ENCODE measurements at regions of chr4 and their contacts with region 1.

Region 1: GRCh38 chr4:118278473-118279274 is 74.1 kb downstream of the PRSS12 start:
- DNase-seq: peak; percentile 99
- H3K4me3 ChIP-seq: peak overlapping the region; percentile 46 to 94 (median 64)
- H3K27ac ChIP-seq: peak overlapping the region; percentile 89 to 95 (median 94)
- H3K4me1 ChIP-seq: peaks cover 24 to 31% of the 10 kb centered on the region in 2 donors
- H3K27me3 ChIP-seq: no peaks in the 10 kb centered on the region
- CTCF ChIP-seq: no peak
- POLR2A ChIP-seq: peak; percentile 51 to 96

Region 2: GRCh38 chr4:118102195-118102594 is 176.5 kb before region 1 on chr4:
- intact Hi-C with region 1: no loop called
- DNase-seq: no peak
- H3K4me3 ChIP-seq: no peak overlapping the region
- H3K27ac ChIP-seq: no peak overlapping the region
- H3K4me1 ChIP-seq: no peaks in the 10 kb centered on the region
- H3K27me3 ChIP-seq: no peaks in the 10 kb centered on the region
- CTCF ChIP-seq: no peak
- POLR2A ChIP-seq: no peak

Region 3: DNA sequence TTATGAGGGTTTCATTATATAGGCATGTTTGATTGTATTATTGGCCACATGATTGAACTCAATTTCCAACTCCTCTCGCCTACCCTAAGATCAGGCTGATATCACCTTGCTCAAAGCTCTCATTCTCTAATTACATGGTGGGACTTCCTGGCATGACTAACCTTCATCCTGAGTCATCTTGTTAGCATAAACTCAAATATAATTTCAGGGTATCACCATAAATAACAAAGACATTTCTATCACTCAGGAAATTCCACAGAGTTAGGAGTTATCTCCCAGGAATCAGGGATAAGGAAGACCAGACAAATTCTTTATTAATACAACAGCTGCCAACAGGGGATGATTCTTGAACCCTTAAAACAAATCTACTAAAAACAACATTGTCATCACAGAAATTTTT is 153.7 kb before region 1 on chr4:
- intact Hi-C with region 1: no loop called
- DNase-seq: no peak
- H3K4me3 ChIP-seq: no peak overlapping the region
- H3K27ac ChIP-seq: no peak overlapping the region
- H3K4me1 ChIP-seq: no peaks in the 10 kb centered on the region
- H3K27me3 ChIP-seq: no peaks in the 10 kb centered on the region
- CTCF ChIP-seq: no peak
- POLR2A ChIP-seq: no peak

Region 4: GRCh38 chr4:118348886-118349285 is 70.2 kb after region 1 on chr4:
- intact Hi-C with region 1: loop called (anchors 10 kb)
- DNase-seq: no peak
- H3K4me3 ChIP-seq: no peak overlapping the region
- H3K27ac ChIP-seq: no peak overlapping the region
- H3K4me1 ChIP-seq: peaks cover 5 to 18% of the 10 kb centered on the region in 2 donors
- H3K27me3 ChIP-seq: no peaks in the 10 kb centered on the region
- CTCF ChIP-seq: no peak
- POLR2A ChIP-seq: no peak

Region 5: DNA sequence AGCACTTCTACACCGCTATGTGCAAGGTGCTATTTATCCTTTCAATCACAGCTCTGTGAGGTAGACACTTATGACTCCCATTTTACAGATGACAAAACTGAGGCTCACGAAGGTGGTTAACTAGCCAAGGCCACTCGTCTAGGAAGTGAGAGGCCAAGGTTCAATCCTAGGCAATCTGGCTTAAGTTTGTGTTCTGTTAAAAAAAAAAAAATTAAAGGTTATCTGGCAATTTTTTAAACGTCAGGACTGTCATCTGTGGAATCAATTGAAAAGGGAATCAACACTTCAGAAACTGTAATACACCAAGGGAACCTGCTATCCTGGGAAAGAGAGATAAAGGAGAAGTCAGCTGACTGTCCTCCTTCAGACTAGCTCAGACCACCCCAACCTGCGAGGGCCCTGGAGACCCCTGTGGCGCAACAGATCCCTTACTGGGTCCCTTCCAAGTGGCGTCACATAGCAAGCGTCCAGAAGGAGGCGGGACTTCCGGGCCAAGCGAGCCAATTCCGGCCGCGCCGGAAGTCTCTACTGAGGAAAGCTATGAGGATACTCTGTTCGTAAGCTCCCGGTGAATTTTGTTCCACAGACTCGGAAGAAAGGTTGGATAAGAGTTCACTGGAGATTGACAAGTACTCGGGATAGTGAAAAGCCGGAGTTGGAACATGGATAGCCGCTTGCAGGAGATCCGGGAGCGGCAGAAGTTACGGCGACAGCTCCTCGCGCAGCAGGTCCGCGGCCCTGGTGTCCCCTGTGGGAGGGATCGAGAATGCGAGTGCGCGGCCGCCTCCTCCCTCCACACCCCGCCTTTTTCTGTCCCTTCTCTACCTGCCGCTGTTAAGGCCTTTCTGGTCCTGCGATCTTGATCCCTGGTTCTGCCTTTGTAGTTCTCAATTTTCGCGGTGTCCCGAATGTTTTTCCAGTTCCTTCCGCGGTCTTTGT is 406.5 kb after region 1 on chr4 and contains the start of gene METTL14:
- intact Hi-C with region 1: loop called (anchors 5 kb)
- DNase-seq: peak; percentile 93 to 94
- H3K4me3 ChIP-seq: peak within 1 kb of the TSS; percentile 5 to 48 (median 41)
- H3K27ac ChIP-seq: peak within 1 kb of the TSS; percentile 75 to 88 (median 87)
- H3K4me1 ChIP-seq: peaks cover 13% of the 10 kb centered on the region in 2 donors
- H3K27me3 ChIP-seq: no peaks in the 10 kb centered on the region
- CTCF ChIP-seq: peak in 3 of 6 experiments; percentile 15 to 30 (median 25)
- POLR2A ChIP-seq: peak in 1 of 2 donors; percentile 82
- total RNA-seq, gene METTL14: 16.0 to 67.8 (median 40.7) TPM

Measured in thyroid gland (tissue), 4 donors.